Sigmoid colon (tissue), 7 donors: ENCODE measurements at regions of chr12 and their contacts with region 1.

Region 1: GRCh38 chr12:53295070-53295890 is at the start of gene PFDN5:
- DNase-seq: peak; percentile 95
- H3K4me3 ChIP-seq: peak within 1 kb of the TSS; percentile 60 to 86 (median 75)
- H3K27ac ChIP-seq: peak within 1 kb of the TSS; percentile 79 to 90 (median 84)
- H3K4me1 ChIP-seq: peaks cover 0 to 42% (median 38%) of the 10 kb centered on the region in 4 donors
- H3K27me3 ChIP-seq: no peaks in the 10 kb centered on the region
- CTCF ChIP-seq: peak in 2 of 4 experiments; percentile 15 to 27
- EP300 ChIP-seq: no peak
- POLR2A ChIP-seq: peak; percentile 59 to 65
- total RNA-seq, gene PFDN5: 757 to 1,153 (median 947) TPM

Region 2: GRCh38 chr12:53220801-53221202 is 74.5 kb before region 1 on chr12:
- intact Hi-C with region 1: loop called (anchors 2 kb)
- DNase-seq: peak; percentile 95
- H3K4me3 ChIP-seq: peak overlapping the region; percentile 67 to 89 (median 81)
- H3K27ac ChIP-seq: peak overlapping the region; percentile 95 to 100 (median 99)
- H3K4me1 ChIP-seq: peaks cover 0 to 79% (median 68%) of the 10 kb centered on the region in 4 donors
- H3K27me3 ChIP-seq: no peaks in the 10 kb centered on the region
- CTCF ChIP-seq: no peak
- EP300 ChIP-seq: no peak
- POLR2A ChIP-seq: no peak

Region 3: GRCh38 chr12:53321074-53321814 is 26.0 kb after region 1 on chr12 and contains the start of gene AAAS:
- intact Hi-C with region 1: loop called (anchors 2 kb)
- DNase-seq: peak; percentile 98
- H3K4me3 ChIP-seq: peak within 1 kb of the TSS; percentile 62 to 71 (median 66)
- H3K27ac ChIP-seq: peak within 1 kb of the TSS; percentile 83 to 95 (median 90)
- H3K4me1 ChIP-seq: peaks cover 0 to 47% (median 36%) of the 10 kb centered on the region in 4 donors
- H3K27me3 ChIP-seq: no peaks in the 10 kb centered on the region
- CTCF ChIP-seq: peak; percentile 96 to 99 (median 98)
- EP300 ChIP-seq: no peak
- POLR2A ChIP-seq: no peak
- total RNA-seq, gene AAAS: 38.2 to 62.0 (median 47.4) TPM